AG04450 (cell line): ENCODE measurements at regions of chr1 and their contacts with region 1.

Region 1: DNA sequence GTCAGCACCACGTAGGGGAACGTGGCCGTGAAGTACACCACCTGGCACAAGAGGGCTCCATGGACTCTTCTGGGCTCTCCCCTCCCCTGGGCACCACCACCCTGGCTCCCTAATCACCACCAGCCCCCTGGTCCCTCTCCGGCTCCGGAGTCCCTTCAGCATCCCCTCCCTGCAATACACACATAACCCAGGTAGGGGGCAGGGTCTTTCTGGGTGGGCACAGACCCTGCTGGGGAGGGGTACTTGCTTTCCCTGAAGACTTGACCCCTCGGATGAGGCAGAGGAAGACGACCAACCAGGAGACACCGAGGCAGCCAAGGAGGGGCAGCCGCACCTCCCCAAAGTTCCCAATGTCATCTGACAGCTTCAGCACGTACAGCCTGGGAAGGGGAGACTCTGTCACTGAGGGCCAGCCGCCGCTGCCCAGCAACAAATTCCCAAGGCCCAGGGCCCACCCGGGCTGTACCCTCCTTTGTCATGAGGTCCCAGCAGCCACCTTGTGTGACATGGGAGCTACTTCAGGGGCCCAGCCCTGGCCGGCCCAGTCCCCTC is 11.3 kb downstream of the CCDC24 start:
- DNase-seq: no peak
- H3K4me3 ChIP-seq: no peak overlapping the region
- H3K27ac ChIP-seq: no peak overlapping the region
- H3K27me3 ChIP-seq: no peaks in the 10 kb centered on the region
- CTCF ChIP-seq: peak; percentile 24; the same call in 1 of the 2 replicates

Region 2: DNA sequence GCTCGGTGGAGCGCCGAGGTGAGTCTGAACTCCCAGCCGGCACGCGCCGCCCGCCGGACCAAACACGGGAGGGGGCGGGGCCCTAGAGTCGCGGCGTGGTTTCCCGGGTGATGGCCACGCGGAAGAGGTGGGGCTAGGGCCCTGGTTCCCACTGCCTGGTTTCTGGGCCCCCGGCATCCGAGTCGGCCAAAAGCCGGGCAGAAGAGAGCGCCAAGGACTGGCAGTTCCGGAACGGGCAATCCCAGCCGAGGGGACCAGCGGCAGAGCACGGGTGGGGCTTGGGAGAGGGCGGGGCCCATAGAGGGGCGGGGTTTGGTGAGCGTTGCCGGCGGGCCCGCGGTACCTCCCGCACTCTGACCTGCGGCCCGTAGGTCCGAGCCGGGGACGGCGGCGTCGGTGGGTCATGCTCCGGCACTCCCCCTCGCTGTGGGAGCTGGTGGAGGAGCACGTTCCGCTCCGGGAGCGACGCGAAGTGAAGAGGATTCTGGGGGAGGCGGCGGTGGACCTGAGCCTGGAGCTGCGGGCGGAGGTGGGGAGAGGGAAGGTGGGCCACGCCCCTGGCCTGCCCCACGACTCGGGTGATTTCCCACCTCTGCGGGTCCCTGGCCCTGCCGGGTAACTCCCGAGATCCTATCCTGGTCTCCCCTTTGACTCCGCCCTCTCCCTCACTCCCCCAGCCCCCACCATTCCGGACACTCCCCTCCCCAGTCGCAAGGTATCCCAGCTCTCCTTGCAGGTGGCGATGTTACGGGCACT is 11.0 kb before region 1 on chr1 and contains the start of gene CCDC24:
- CTCF ChIA-PET with region 1: interaction called, 23 read pairs
- POLR2A ChIA-PET with region 1: interaction called, 5 read pairs
- DNase-seq: peak; percentile 24
- H3K4me3 ChIP-seq: peak within 1 kb of the TSS; percentile 75
- H3K27ac ChIP-seq: peak within 1 kb of the TSS; percentile 31
- H3K27me3 ChIP-seq: no peaks in the 10 kb centered on the region
- CTCF ChIP-seq: no peak
- polyA plus RNA-seq, gene CCDC24: 1.1 and 1.6 TPM in 2 replicates

Region 3: GRCh38 chr1:44021581-44022321 is 19.1 kb after region 1 on chr1:
- CTCF ChIA-PET with region 1: interaction called, 78 read pairs
- POLR2A ChIA-PET with region 1: no interaction called
- DNase-seq: no peak
- H3K4me3 ChIP-seq: no peak overlapping the region
- H3K27ac ChIP-seq: no peak overlapping the region
- H3K27me3 ChIP-seq: no peaks in the 10 kb centered on the region
- CTCF ChIP-seq: no peak

Region 4: DNA sequence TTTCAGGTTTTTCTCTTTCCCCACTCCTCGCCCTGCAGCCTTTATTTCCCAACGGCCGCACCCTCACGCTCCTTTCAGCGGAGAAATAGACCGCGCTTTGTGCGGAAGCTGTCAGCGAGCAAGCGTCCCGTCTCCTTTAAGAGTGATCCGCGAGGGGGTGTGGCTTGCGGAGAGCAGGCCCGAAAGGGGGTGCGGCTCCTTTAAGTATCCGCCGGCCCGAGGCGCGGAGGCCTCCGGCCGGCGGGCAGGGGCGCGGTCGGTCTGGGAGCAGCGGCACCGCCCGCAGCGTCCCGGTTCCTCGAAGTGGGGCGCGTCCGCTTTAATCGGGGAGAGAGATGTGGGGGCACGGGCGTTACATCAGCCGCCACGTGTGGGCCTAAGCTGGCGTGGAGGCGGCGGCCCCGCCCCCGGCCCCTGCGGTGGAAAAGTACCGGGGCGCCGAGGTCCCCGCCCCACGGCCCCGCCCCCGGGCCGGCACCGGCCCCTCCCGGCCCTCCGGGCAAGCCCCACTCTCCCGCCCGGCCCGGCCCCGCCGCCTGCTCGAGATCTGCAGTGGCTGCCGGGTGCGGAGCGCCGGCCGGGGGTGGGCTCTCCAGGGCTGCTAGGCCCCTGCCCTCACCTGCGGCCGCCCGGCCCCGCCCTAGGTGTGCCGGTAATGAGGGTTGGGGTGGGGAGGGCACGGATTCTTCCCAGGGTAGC is 27.4 kb after region 1 on chr1:
- CTCF ChIA-PET with region 1: interaction called, 33 read pairs
- POLR2A ChIA-PET with region 1: interaction called, 3 read pairs
- DNase-seq: peak; percentile 65
- H3K4me3 ChIP-seq: peak overlapping the region; percentile 84
- H3K27ac ChIP-seq: peak overlapping the region; percentile 47
- H3K27me3 ChIP-seq: no peaks in the 10 kb centered on the region
- CTCF ChIP-seq: no peak

Region 5: DNA sequence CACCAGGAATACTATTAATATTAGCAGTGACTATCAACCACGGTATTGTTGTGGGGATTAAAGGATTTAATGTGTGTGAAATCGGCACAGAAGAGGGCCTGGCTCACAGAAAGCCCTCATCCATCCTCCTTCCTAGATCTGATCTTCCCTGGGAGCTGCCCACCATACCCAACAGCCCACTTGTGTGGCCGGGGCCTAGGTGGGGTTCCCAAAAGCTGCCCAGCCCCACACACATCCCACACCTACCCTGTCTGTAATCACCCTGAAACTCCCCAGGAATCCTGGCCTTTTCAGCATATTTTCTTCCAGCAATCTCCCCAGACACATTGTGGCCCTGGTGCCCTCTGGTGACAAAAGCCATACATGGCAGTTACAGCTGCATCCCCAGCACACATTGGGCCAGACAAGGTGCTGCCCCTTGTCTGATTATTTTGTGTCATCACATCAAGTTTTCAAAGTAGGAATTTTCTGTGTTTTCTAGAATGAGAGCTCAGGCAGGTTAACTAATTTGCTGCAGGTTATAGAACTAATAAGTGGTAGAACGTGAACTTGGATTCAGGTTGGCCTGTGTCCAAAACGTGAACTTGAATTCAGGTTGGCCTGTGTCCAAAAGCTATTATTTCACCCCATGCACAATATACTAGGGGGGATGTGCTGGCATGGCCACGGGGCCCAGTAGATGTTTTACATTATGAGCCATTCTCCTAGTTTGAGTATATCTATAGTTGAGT is 33.9 kb after region 1 on chr1:
- CTCF ChIA-PET with region 1: interaction called, 51 read pairs
- POLR2A ChIA-PET with region 1: interaction called, 3 read pairs
- DNase-seq: no peak
- H3K4me3 ChIP-seq: no peak overlapping the region
- H3K27ac ChIP-seq: peak overlapping the region; percentile 11
- H3K27me3 ChIP-seq: no peaks in the 10 kb centered on the region
- CTCF ChIP-seq: peak; percentile 63

Region 6: DNA sequence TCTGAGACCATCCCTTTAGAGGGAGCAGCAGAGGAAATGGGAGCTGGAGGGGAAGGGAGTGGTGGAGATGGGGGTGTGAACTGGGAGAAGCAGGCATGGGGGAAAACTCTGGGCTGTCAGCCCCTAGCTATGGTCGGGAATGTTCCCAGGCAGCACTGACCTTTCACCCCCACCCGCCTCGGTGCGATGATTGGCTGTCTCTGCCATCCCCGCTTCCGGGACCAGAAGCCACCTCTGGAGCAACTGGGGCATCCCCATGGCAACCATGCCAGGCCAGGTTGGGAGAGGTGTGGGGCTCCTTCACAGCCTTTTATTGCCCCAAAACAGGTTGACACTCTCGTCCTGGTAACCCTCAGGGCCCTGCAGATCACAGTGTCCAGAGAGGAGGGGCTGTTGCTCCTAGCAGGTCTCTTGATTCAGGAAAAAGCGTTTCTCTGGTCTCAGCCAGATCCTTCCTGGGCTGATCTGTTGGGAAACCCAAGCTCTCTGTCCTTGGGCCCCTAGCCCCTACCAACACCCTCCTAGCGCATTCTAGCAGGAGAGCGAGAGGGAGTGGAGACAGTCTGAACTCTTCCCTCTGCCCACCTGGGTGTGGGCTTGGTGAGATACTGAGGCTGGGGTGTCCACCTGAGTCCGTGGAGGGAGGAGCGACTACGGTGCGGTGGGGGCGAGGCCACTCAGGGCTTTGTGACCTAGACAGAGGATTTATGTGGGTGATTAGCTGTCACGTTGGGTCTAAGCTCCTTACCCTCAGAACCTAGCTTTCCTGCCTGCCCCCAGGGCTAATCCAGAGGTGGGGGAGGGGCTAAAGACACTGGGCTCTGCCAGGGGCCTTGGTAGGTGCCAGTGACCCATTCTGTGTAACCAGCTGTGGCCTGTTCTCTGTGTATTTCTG is 40.7 kb after region 1 on chr1:
- CTCF ChIA-PET with region 1: interaction called, 182 read pairs
- POLR2A ChIA-PET with region 1: interaction called, 4 read pairs
- DNase-seq: no peak
- H3K4me3 ChIP-seq: no peak overlapping the region
- H3K27ac ChIP-seq: no peak overlapping the region
- H3K27me3 ChIP-seq: no peaks in the 10 kb centered on the region
- CTCF ChIP-seq: no peak

Region 7: GRCh38 chr1:44049839-44050238 is 47.2 kb after region 1 on chr1:
- CTCF ChIA-PET with region 1: interaction called, 182 read pairs
- POLR2A ChIA-PET with region 1: interaction called, 4 read pairs
- DNase-seq: peak; percentile 82
- H3K4me3 ChIP-seq: no peak overlapping the region
- H3K27ac ChIP-seq: peak overlapping the region; percentile 79
- H3K27me3 ChIP-seq: no peaks in the 10 kb centered on the region
- CTCF ChIP-seq: no peak

Region 8: GRCh38 chr1:44062656-44063179 is 60.0 kb after region 1 on chr1:
- CTCF ChIA-PET with region 1: no interaction called
- POLR2A ChIA-PET with region 1: no interaction called
- DNase-seq: no peak
- H3K4me3 ChIP-seq: no peak overlapping the region
- H3K27ac ChIP-seq: no peak overlapping the region
- H3K27me3 ChIP-seq: no peaks in the 10 kb centered on the region
- CTCF ChIP-seq: no peak